ENCODE measurements at regions of chr4 and their contacts with region 1.

Region 1: DNA sequence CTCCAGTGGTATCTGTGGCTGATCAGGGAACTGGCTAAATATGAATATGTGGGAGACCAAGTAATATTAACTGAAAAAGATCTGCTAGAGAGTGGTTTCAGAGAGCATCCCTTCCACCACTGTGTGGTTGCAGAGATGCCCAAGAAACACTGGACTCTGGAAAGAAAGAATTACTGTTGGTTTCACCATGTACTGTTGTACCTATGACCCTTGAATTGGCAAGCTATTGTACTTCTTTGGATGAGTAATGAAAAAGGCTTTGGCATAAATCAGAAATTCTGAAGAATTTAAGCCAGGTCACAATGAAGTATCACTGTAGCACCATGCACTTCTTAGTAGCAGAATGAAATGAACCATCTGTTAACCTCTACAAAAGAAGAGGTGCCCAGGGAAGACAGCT is 134.4 kb upstream of the INTU start:
- DNase-seq: no peak
- ATAC-seq: no peak
- H3K4me3 ChIP-seq: no peak overlapping the region
- H3K27ac ChIP-seq: no peak overlapping the region
- H3K4me1 ChIP-seq: no peaks in the 10 kb centered on the region
- H3K27me3 ChIP-seq: peaks cover 0 to 2% of the 10 kb centered on the region in 2 donors

Region 2: DNA sequence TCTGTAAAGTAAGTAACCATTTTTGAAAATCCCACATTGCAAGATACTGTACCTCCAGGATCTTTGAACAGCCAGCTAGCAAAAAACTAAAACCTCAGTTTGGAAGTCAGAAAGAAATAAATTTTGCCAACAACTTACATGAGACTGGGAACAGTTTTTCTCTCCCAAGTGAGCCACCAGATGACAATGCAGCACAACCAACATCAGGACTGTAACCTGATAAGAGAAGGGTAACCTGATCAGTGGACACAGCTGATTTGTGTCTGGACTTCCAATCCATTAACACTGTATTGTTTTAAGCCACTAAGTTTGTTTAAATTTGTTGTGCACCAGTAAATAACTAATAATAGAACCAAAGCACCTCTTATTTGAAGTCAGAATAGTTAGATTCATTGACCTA is 1260.4 kb before region 1 on chr4:
- intact Hi-C with region 1: loop called in 1 of 2 experiments (anchors 5 kb)
- DNase-seq: no peak
- ATAC-seq: no peak
- H3K4me3 ChIP-seq: no peak overlapping the region
- H3K27ac ChIP-seq: no peak overlapping the region
- H3K4me1 ChIP-seq: no peaks in the 10 kb centered on the region
- H3K27me3 ChIP-seq: no peaks in the 10 kb centered on the region

Region 3: DNA sequence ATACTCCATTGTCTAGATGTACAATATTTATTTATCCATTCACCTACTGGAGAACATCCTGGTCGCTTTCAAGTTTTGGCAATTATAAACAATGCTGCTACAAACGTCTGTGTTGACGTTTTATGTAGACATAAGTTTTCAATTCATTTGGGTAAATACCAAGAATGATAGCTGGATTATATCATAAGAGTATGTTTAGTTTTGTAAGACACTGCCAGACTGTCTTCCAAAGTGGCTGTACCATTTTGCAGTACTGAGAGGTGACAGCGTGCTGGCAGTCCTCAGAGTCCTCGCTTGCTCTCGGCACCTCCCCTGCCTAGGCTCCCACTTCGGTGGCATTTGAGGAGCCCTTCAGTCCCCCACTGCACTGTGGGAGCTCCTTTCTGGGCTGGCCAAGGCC is 118.9 kb before region 1 on chr4:
- intact Hi-C with region 1: no loop called
- DNase-seq: no peak
- ATAC-seq: no peak
- H3K4me3 ChIP-seq: no peak overlapping the region
- H3K27ac ChIP-seq: no peak overlapping the region
- H3K4me1 ChIP-seq: no peaks in the 10 kb centered on the region
- H3K27me3 ChIP-seq: peaks cover 0 to 1% of the 10 kb centered on the region in 2 donors

Measured in aorta (tissue), 5 donors.